ENCODE measurements at regions of chr3 and their contacts with region 1.

Region 1: DNA sequence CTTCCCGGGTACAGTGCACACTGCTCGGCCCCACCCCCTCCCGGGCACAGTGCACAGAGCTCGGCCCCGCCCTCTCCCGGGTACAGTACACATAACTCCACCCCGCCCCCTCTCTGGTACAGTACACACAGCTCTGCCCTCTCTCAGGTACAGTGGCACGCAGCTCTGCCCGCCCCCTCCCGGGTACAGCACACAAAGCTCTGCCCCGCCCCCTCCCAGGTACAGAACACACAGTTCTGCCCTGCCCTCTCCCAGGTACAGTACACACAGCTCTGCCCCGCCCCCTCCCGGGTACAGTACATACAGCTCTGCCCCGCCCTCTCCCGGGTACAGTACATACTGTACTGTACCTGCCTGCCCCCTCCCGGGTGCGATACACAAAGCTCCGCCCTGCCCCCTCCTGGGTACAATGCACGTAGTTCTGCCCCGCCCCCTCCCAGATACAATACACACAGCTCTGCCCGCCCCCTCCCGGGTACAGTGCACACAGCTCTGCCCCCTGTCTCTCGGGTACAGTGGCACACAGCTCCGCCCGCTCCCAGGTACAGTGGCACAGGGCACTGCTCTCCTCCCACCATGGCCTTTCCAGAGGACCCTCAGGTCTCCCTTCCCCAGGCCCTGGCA is 16.4 kb upstream of the PRR20G start:
- DNase-seq: peak; percentile 98
- H3K4me3 Mint-ChIP-seq: peak overlapping the region; percentile 75
- H3K27ac Mint-ChIP-seq: no peak overlapping the region
- H3K4me1 Mint-ChIP-seq: peaks cover 12% of the 10 kb centered on the region
- H3K27me3 Mint-ChIP-seq: peaks cover 81% of the 10 kb centered on the region
- CTCF ChIP-seq: no peak

Region 2: GRCh38 chr3:126599101-126599500 is 705.1 kb before region 1 on chr3:
- CTCF ChIA-PET with region 1: no interaction called
- intact Hi-C with region 1: no loop called
- DNase-seq: no peak
- H3K4me3 Mint-ChIP-seq: no peak overlapping the region
- H3K27ac Mint-ChIP-seq: no peak overlapping the region
- H3K4me1 Mint-ChIP-seq: no peaks in the 10 kb centered on the region
- H3K27me3 Mint-ChIP-seq: no peaks in the 10 kb centered on the region
- CTCF ChIP-seq: no peak

Region 3: DNA sequence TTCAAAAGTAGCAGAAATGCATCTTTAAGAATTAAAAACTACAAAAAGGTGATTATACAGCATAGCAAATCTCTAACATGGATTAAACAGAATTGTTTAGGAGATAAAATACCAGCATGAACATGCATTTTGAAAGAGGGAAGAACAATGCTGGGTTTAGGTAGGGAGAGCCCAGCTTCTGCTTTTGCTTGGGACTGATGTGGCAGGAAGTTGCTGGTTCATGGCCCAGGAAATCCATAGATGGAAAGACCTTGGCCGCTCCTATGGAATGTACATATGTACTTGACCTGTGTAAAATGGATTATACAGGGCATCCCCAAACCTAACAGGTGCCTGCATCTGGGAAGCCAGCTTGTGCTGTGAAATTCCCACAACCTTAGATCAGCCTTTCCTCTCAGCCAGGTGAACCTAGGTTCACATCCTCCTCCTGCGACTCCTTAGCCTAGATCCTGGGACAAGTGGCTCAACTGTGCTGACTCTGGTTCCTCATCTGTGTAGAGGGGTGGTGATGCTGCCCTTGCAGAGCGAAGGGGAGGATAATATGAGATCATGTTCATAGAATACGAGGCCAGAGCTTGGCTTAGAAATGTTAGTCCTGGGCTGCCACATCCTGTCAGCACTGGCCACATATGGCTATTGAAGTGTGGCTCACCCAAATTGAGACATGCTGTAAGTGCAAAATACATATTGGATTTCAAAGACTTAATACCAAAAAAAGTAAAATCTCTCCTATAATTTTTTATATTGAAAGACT is 368.3 kb before region 1 on chr3:
- CTCF ChIA-PET with region 1: interaction called, 10 read pairs
- intact Hi-C with region 1: no loop called
- DNase-seq: no peak
- H3K4me3 Mint-ChIP-seq: no peak overlapping the region
- H3K27ac Mint-ChIP-seq: no peak overlapping the region
- H3K4me1 Mint-ChIP-seq: no peaks in the 10 kb centered on the region
- H3K27me3 Mint-ChIP-seq: no peaks in the 10 kb centered on the region
- CTCF ChIP-seq: no peak

Region 4: GRCh38 chr3:127074728-127075360 is 229.4 kb before region 1 on chr3:
- CTCF ChIA-PET with region 1: no interaction called
- intact Hi-C with region 1: no loop called
- DNase-seq: peak; percentile 21
- H3K4me3 Mint-ChIP-seq: no peak overlapping the region
- H3K27ac Mint-ChIP-seq: no peak overlapping the region
- H3K4me1 Mint-ChIP-seq: no peaks in the 10 kb centered on the region
- H3K27me3 Mint-ChIP-seq: peaks cover 54% of the 10 kb centered on the region
- CTCF ChIP-seq: no peak

Region 5: DNA sequence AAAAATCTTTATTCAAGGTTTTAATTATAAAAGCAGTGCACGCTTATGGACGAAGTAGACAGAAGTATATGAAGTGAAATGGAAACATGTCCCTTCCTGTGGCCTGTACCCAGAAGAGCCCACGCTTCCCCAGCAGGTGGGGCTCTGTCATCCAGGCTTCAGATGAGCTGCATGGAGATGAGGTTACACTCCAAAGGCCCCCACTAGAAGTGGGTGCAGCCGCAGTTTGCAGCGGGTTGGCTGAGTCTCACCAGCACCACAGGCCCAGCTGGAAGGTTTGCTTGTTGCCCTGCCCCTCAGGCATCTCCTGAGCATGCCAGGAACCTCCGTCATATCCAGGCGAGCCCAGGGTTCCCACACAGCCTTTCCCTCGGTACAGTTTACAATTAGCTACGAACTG is 49.5 kb before region 1 on chr3:
- CTCF ChIA-PET with region 1: interaction called, 26 read pairs
- intact Hi-C with region 1: no loop called
- DNase-seq: peak; percentile 57
- H3K4me3 Mint-ChIP-seq: no peak overlapping the region
- H3K27ac Mint-ChIP-seq: no peak overlapping the region
- H3K4me1 Mint-ChIP-seq: no peaks in the 10 kb centered on the region
- H3K27me3 Mint-ChIP-seq: peaks cover 81% of the 10 kb centered on the region
- CTCF ChIP-seq: peak; percentile 60

Region 6: GRCh38 chr3:127351321-127351720 is 47.1 kb after region 1 on chr3:
- CTCF ChIA-PET with region 1: no interaction called
- intact Hi-C with region 1: no loop called
- DNase-seq: no peak
- H3K4me3 Mint-ChIP-seq: no peak overlapping the region
- H3K27ac Mint-ChIP-seq: no peak overlapping the region
- H3K4me1 Mint-ChIP-seq: no peaks in the 10 kb centered on the region
- H3K27me3 Mint-ChIP-seq: peaks cover 80% of the 10 kb centered on the region
- CTCF ChIP-seq: no peak

Region 7: DNA sequence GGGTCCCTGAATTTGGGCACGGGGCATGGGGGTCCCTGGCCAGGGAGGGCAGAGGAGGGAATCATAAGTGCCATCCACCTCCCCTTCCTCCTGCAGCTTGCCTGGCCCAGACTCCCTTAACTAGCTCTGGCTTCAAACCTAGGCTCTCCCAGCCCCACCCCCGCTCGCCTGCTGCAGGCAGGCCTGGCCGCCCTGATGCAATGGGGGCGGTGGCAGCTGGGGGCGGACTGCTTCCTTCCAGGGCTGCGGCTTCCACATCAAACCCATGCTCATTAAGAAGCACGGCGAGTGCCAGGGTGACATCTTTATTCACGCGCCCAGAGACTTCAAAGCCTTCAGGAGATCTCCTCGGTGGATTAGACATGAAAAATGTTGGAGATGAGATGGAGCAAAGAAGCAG is 163.2 kb after region 1 on chr3:
- CTCF ChIA-PET with region 1: no interaction called
- intact Hi-C with region 1: no loop called
- DNase-seq: no peak
- H3K4me3 Mint-ChIP-seq: no peak overlapping the region
- H3K27ac Mint-ChIP-seq: no peak overlapping the region
- H3K4me1 Mint-ChIP-seq: no peaks in the 10 kb centered on the region
- H3K27me3 Mint-ChIP-seq: peaks cover 75% of the 10 kb centered on the region
- CTCF ChIP-seq: no peak

Measured in Calu3 (cell line).